Left ventricle myocardium inferior (tissue), 1 donor: ENCODE measurements at regions of chr5 and their contacts with region 1.

Region 1: GRCh38 chr5:173972925-173973615 is 15.9 kb upstream of the C5orf47 start:
- DNase-seq: peak; percentile 75
- H3K4me3 ChIP-seq: peak overlapping the region; percentile 68
- H3K27ac ChIP-seq: peak overlapping the region; percentile 76
- H3K4me1 ChIP-seq: peaks cover 34% of the 10 kb centered on the region
- H3K27me3 ChIP-seq: no peaks in the 10 kb centered on the region
- CTCF ChIP-seq: peak; percentile 89

Region 2: GRCh38 chr5:173618927-173619519 is 354.0 kb before region 1 on chr5:
- intact Hi-C with region 1: loop called (anchors 2 kb)
- DNase-seq: no peak
- H3K4me3 ChIP-seq: no peak overlapping the region
- H3K27ac ChIP-seq: no peak overlapping the region
- H3K4me1 ChIP-seq: peaks cover 34% of the 10 kb centered on the region
- H3K27me3 ChIP-seq: no peaks in the 10 kb centered on the region
- CTCF ChIP-seq: peak; percentile 85

Region 3: GRCh38 chr5:173781814-173782670 is 191.0 kb before region 1 on chr5:
- intact Hi-C with region 1: no loop called
- DNase-seq: peak; percentile 75
- H3K4me3 ChIP-seq: no peak overlapping the region
- H3K27ac ChIP-seq: peak overlapping the region; percentile 58
- H3K4me1 ChIP-seq: peaks cover 18% of the 10 kb centered on the region
- H3K27me3 ChIP-seq: no peaks in the 10 kb centered on the region
- CTCF ChIP-seq: no peak